ENCODE measurements at regions of chr12 and their contacts with region 1.

Region 1: DNA sequence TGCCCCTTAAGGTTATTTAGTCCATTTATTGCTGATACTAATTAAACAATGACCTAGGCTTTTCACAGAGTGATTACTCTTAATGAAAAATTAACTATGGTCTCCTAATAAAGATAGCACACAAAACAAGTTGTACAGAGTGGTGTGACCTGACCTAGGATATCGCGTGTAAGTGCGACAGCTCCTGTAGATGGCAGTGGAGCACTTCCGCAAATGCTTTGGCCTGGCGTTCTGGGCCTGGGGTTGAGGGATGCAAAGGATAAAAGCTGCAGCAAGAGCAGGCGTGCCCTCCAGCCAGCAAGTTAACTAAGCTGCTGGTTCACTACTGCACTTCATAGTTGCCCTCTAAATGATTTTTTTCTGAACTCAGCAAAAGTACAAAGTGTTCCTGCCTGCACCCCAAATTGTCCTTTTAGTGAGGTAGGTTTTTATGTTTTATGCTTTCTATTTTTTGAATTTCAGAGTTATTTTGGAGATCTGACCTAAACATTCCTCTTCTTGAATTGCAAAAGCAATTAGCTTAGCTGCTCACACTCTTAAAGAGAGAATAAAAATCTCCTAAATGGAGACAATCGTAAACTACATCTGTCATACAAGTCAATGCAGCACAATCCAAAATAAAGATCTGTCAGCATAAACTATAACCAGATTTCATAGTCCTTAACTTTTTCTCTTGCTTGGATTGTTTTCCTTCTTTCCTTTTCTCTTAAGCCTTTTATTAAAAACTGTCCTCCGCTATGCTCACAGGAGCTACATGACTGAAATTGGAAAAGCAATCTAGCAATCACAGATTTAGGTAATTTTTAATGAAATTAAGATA is 379.6 kb downstream of the LRIG3 start:
- DNase-seq: peak; percentile 48
- H3K27ac ChIP-seq: no peak overlapping the region
- CTCF ChIP-seq: peak; percentile 91

Region 2: GRCh38 chr12:58291106-58291505 is 249.6 kb before region 1 on chr12:
- CTCF ChIA-PET with region 1: no interaction called
- POLR2A ChIA-PET with region 1: no interaction called
- DNase-seq: no peak
- H3K27ac ChIP-seq: no peak overlapping the region
- CTCF ChIP-seq: no peak

Region 3: GRCh38 chr12:58554522-58555157 is 13.9 kb after region 1 on chr12:
- CTCF ChIA-PET with region 1: interaction called, 11 read pairs
- POLR2A ChIA-PET with region 1: no interaction called
- DNase-seq: no peak
- H3K27ac ChIP-seq: no peak overlapping the region
- CTCF ChIP-seq: no peak

Region 4: DNA sequence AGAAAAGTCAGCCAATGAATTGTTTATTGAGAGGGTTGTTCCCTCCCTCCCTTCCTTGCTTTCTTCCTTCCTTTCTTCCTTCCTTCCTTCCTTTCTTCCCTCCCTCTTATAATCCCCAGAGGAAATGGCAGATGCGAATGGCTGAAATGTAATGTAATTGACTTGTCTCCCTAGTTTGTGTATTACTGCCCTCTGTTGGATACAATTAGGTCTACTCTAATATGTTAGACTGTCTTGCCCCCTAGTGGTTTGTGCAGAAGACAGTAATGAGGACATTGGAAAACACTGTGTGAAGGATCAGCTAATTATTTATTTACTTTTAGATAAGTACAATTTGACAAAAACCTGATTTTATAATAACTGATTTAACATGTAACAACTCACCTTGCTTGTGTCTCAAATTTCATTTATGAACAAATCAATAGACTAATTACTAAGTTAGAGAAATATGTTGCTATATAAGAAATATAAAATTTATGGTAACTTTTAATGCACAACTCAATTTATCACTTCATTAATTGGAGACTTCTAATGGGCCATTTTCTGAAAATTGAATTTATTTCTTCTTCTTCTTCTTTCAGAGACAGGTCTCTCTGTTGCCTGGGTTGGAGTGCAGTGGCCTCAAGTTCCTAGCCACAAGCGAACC is 609.4 kb after region 1 on chr12:
- CTCF ChIA-PET with region 1: interaction called, 10 read pairs
- POLR2A ChIA-PET with region 1: no interaction called
- DNase-seq: peak; percentile 67
- H3K27ac ChIP-seq: no peak overlapping the region
- CTCF ChIP-seq: peak; percentile 94

Measured in RWPE1 (cell line).